G401 (cell line): ENCODE measurements at regions of chr17 and their contacts with region 1.

Region 1: DNA sequence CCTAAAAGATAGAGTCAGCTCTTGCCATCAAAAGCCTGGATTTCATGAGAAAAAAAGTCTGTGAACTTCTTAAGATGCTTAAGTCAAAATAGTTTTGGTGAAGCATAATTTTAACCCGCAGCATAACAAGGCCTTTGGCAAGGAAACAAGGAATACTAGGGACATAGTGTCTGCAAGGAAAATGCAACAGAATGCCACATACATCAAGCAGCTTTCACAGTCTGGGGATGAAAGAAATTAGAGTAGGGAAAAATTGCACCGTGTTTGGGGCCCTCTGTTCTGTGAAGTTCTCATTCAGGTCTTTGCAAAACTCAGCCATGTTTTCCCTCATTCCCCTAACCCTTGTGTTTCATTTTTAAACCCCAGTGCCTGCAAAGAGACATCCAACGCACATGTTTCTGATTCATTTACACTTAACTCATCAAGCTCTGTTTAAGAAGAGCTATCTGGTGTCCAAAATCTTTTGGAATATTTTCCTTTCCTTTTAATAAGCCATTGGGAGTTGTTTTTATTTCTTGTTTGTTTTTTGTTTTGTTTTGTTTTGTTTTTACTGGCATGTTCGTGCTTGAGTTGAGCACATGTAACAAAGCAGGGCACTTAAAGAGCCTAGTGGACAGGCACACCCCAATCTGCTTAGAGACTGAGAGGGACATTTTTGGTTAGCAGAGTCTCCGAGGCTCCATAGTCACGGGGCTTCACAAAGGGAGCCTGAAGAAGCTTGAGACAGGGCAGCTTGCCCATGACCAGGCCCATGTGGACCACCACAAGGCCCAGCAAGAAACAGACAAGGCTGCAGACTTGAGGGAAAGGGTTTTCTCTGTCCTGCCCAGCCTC is 116.5 kb downstream of the ANKFN1 start:
- DNase-seq: no peak

Region 2: DNA sequence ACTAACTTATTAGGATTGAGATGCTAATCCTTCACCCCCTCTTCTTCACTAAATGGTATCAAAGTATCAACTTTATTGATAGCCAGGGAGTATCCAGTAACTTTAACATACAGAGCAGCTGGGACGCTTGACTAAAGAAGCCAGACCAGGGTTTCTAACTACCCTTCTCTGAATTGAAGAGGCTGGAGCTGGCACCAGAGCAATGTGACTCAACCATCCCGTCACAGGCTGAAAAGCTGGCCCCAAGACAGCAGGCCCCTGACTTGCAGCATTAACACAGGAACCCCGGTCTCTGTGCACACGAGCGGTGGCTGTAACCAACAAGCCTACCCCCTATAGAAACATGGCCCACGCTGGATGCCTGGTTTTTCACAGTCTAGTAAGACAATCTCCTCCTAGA is 56.7 kb before region 1 on chr17:
- in situ Hi-C with region 1: loop called (anchors 5 kb)
- DNase-seq: no peak